PC-3 (cell line): ENCODE measurements at regions of chr3 and their contacts with region 1.

Region 1: GRCh38 chr3:36416599-36416998 is 36.3 kb downstream of the STAC start:
- DNase-seq: peak; percentile 82
- ATAC-seq: peak; percentile 97
- H3K4me3 ChIP-seq: peak overlapping the region; percentile 33; the same call in 1 of the 2 replicates
- H3K27ac ChIP-seq: peak overlapping the region; percentile 87
- H3K4me1 ChIP-seq: peaks cover 27% of the 10 kb centered on the region
- H3K27me3 ChIP-seq: no peaks in the 10 kb centered on the region
- CTCF ChIP-seq: no peak

Region 2: DNA sequence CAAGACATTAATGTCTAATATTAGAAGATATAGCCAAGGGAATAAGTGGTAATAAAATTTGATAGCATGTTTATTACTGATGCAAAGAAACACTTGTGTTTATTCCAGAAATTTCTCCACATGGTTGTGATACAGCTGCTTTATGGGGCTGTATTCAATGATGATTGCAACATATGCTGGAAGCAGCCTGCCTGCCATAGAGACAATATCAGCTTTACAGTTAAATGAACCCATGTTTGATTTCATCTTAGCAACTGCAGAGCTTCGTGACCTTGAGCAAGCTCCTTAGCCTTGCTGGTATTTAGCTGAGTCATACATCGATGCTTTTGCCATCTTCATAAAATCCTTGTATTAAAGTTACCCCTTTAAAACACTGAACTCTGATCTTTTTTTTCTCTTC is 204.3 kb before region 1 on chr3:
- CTCF ChIA-PET with region 1: no interaction called
- POLR2A ChIA-PET with region 1: no interaction called
- intact Hi-C with region 1: loop called (anchors 10 kb)
- DNase-seq: peak; percentile 33
- ATAC-seq: peak; percentile 52
- H3K4me3 ChIP-seq: no peak overlapping the region
- H3K27ac ChIP-seq: no peak overlapping the region
- H3K4me1 ChIP-seq: peaks cover 11% of the 10 kb centered on the region
- H3K27me3 ChIP-seq: no peaks in the 10 kb centered on the region
- CTCF ChIP-seq: no peak

Region 3: GRCh38 chr3:36372534-36372935 is 44.1 kb before region 1 on chr3:
- CTCF ChIA-PET with region 1: no interaction called
- POLR2A ChIA-PET with region 1: no interaction called
- intact Hi-C with region 1: loop called (anchors 1 kb)
- DNase-seq: peak; percentile 59
- ATAC-seq: peak; percentile 90
- H3K4me3 ChIP-seq: no peak overlapping the region
- H3K27ac ChIP-seq: no peak overlapping the region
- H3K4me1 ChIP-seq: peaks cover 18% of the 10 kb centered on the region
- H3K27me3 ChIP-seq: no peaks in the 10 kb centered on the region
- CTCF ChIP-seq: no peak

Region 4: GRCh38 chr3:36380221-36381031 is 36.2 kb before region 1 on chr3 and contains the start of gene STAC:
- CTCF ChIA-PET with region 1: no interaction called
- POLR2A ChIA-PET with region 1: no interaction called
- intact Hi-C with region 1: loop called (anchors 2 kb)
- DNase-seq: peak; percentile 71
- ATAC-seq: peak; percentile 94
- H3K4me3 ChIP-seq: peak within 1 kb of the TSS; percentile 74
- H3K27ac ChIP-seq: no peak within 1 kb of the TSS
- H3K4me1 ChIP-seq: peaks cover 5% of the 10 kb centered on the region; the same call in 1 of the 2 replicates
- H3K27me3 ChIP-seq: no peaks in the 10 kb centered on the region
- CTCF ChIP-seq: no peak
- total RNA-seq, gene STAC: 4.4 and 6.7 TPM in 2 replicates

Region 5: GRCh38 chr3:36525115-36525801 is 108.7 kb after region 1 on chr3:
- CTCF ChIA-PET with region 1: no interaction called
- POLR2A ChIA-PET with region 1: no interaction called
- intact Hi-C with region 1: loop called (anchors 2 kb)
- DNase-seq: peak; percentile 80
- ATAC-seq: peak; percentile 97
- H3K4me3 ChIP-seq: peak overlapping the region; percentile 37
- H3K27ac ChIP-seq: peak overlapping the region; percentile 85
- H3K4me1 ChIP-seq: peaks cover 15% of the 10 kb centered on the region
- H3K27me3 ChIP-seq: no peaks in the 10 kb centered on the region
- CTCF ChIP-seq: no peak

Region 6: GRCh38 chr3:36540888-36541518 is 124.4 kb after region 1 on chr3:
- CTCF ChIA-PET with region 1: no interaction called
- POLR2A ChIA-PET with region 1: no interaction called
- intact Hi-C with region 1: loop called (anchors 2 kb)
- DNase-seq: peak; percentile 71
- ATAC-seq: peak; percentile 78
- H3K4me3 ChIP-seq: no peak overlapping the region
- H3K27ac ChIP-seq: no peak overlapping the region
- H3K4me1 ChIP-seq: no peaks in the 10 kb centered on the region
- H3K27me3 ChIP-seq: no peaks in the 10 kb centered on the region
- CTCF ChIP-seq: peak; percentile 96

Region 7: GRCh38 chr3:36852071-36852470 is 435.5 kb after region 1 on chr3:
- CTCF ChIA-PET with region 1: no interaction called
- POLR2A ChIA-PET with region 1: no interaction called
- intact Hi-C with region 1: no loop called
- DNase-seq: no peak
- ATAC-seq: no peak
- H3K4me3 ChIP-seq: no peak overlapping the region
- H3K27ac ChIP-seq: no peak overlapping the region
- H3K4me1 ChIP-seq: no peaks in the 10 kb centered on the region
- H3K27me3 ChIP-seq: no peaks in the 10 kb centered on the region
- CTCF ChIP-seq: no peak